HepG2 (cell line): ENCODE measurements at regions of chr9 and their contacts with region 1.

Region 1: GRCh38 chr9:7150153-7150890 is 392.5 kb downstream of the KDM4C start:
- DNase-seq: no peak
- ATAC-seq: no peak
- H3K4me3 ChIP-seq: no peak overlapping the region
- H3K27ac ChIP-seq: no peak overlapping the region
- H3K4me1 ChIP-seq: peaks cover 14% of the 10 kb centered on the region
- H3K27me3 ChIP-seq: no peaks in the 10 kb centered on the region
- CTCF ChIP-seq: no peak
- EP300 ChIP-seq: no peak
- POLR2A ChIP-seq: no peak
- RAD21 ChIP-seq: no peak

Region 2: GRCh38 chr9:7083192-7083591 is 67.1 kb before region 1 on chr9:
- CTCF ChIA-PET with region 1: no interaction called
- POLR2A ChIA-PET with region 1: no interaction called
- in situ Hi-C with region 1: no loop called
- intact Hi-C with region 1: no loop called
- DNase-seq: peak; percentile 56
- ATAC-seq: peak; percentile 71
- H3K4me3 ChIP-seq: no peak overlapping the region
- H3K27ac ChIP-seq: no peak overlapping the region
- H3K4me1 ChIP-seq: 0 out of 2 replicates have a peak, but pooled peaks cover 7% of the 10 kb centered on the region
- H3K27me3 ChIP-seq: no peaks in the 10 kb centered on the region
- CTCF ChIP-seq: no peak
- EP300 ChIP-seq: no peak
- POLR2A ChIP-seq: no peak
- RAD21 ChIP-seq: no peak

Region 3: DNA sequence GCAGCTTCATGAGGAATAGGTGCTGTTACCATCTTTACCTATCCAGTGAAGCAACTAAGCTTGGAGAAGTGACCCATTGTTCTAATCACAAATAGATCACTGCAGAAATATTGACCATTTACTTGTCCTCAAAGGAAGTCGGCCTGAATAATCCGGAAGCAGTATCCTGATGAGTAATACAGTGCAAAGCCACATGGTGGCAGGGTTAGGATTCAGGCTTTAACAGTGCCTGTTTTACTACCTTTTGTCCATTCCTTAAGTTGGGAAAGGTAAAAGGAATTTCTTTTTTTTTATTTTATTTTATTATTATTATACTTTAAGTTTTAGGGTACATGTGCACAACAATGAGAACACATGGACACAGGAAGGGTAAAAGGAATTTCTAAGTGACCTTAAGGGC is 56.3 kb before region 1 on chr9:
- CTCF ChIA-PET with region 1: no interaction called
- POLR2A ChIA-PET with region 1: no interaction called
- in situ Hi-C with region 1: loop called (anchors 10 kb)
- intact Hi-C with region 1: no loop called
- DNase-seq: peak; percentile 15
- ATAC-seq: peak; percentile 85
- H3K4me3 ChIP-seq: no peak overlapping the region
- H3K27ac ChIP-seq: no peak overlapping the region
- H3K4me1 ChIP-seq: no peaks in the 10 kb centered on the region
- H3K27me3 ChIP-seq: no peaks in the 10 kb centered on the region
- CTCF ChIP-seq: 0 out of 2 replicates have a peak, but pooled peaks have one; percentile 8
- EP300 ChIP-seq: no peak
- POLR2A ChIP-seq: no peak
- RAD21 ChIP-seq: no peak